ENCODE measurements at regions of chr10 and their contacts with region 1.

Region 1: GRCh38 chr10:43436400-43437140 is at the start of gene ZNF487:
- DNase-seq: peak; percentile 73 to 95 (median 89)

Region 2: GRCh38 chr10:43396928-43397624 is 39.5 kb before region 1 on chr10:
- intact Hi-C with region 1: loop called (anchors 5 kb)
- DNase-seq: peak; percentile 63 to 94 (median 85)